HepG2 (cell line): ENCODE measurements at regions of chr21 and their contacts with region 1.

Region 1: GRCh38 chr21:36989699-36990507 is 16.6 kb upstream of the RIPPLY3 start:
- DNase-seq: peak; percentile 80
- ATAC-seq: peak; percentile 94
- H3K4me3 ChIP-seq: peak overlapping the region; percentile 63 to 69 (median 67); a peak in 5 of 6 replicates
- H3K27ac ChIP-seq: peak overlapping the region; percentile 92
- H3K4me1 ChIP-seq: peaks cover 60% of the 10 kb centered on the region
- H3K27me3 ChIP-seq: no peaks in the 10 kb centered on the region
- CTCF ChIP-seq: peak; percentile 86
- EP300 ChIP-seq: no peak
- POLR2A ChIP-seq: peak; percentile 72 to 75; a peak in 3 of 4 replicates
- RAD21 ChIP-seq: peak; percentile 88

Region 2: GRCh38 chr21:36835383-36835795 is 154.5 kb before region 1 on chr21:
- CTCF ChIA-PET with region 1: no interaction called
- POLR2A ChIA-PET with region 1: no interaction called
- in situ Hi-C with region 1: no loop called
- intact Hi-C with region 1: no loop called
- DNase-seq: no peak
- ATAC-seq: no peak
- H3K4me3 ChIP-seq: no peak overlapping the region
- H3K27ac ChIP-seq: no peak overlapping the region
- H3K4me1 ChIP-seq: peaks cover 12% of the 10 kb centered on the region; the same call in 1 of the 2 replicates
- H3K27me3 ChIP-seq: no peaks in the 10 kb centered on the region
- CTCF ChIP-seq: no peak
- EP300 ChIP-seq: no peak
- POLR2A ChIP-seq: no peak
- RAD21 ChIP-seq: no peak

Region 3: DNA sequence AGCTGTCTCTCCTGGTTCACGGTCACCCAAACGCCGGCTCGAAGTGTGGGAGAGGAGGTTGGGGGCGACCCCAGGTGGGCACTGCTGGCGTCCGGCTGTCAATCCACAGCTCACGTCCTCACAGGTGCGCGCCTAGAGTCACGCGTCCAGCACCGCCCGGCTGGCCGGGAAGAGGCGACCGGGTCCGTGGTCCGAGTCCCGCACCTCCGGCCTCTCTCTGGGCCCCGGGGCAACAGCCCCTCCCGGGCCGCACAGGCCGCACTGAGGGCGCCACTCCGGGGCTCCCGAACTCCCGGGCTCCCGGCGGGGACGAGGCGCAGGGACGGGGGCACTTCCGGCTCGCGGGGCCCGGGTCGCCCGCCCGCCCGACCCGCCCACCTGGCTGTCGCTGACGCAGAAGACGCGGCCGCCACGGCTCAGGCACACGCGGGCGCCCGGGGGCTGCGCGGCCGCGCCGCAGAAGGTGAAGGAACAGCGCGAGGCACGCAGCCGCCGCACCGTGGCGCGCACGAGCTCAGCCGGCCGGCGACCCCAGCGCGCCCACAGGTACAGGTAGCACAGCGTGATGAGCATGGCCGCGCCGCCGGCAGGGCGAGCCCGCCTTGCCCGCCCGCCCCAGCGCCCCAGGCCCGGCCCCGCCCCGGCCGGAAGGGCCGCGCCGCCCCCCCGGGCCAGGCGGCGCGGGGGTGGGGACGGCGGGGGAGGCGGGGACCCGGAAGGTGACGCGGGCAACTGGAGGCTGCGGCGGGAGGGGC is 23.7 kb before region 1 on chr21 and contains the start of gene HLCS:
- CTCF ChIA-PET with region 1: no interaction called
- POLR2A ChIA-PET with region 1: interaction called, 21 read pairs
- in situ Hi-C with region 1: no loop called
- intact Hi-C with region 1: no loop called
- DNase-seq: peak; percentile 59
- ATAC-seq: peak; percentile 84
- H3K4me3 ChIP-seq: peak within 1 kb of the TSS; percentile 83 to 88 (median 83)
- H3K27ac ChIP-seq: peak within 1 kb of the TSS; percentile 77
- H3K4me1 ChIP-seq: peaks cover 25% of the 10 kb centered on the region
- H3K27me3 ChIP-seq: no peaks in the 10 kb centered on the region
- CTCF ChIP-seq: peak; percentile 45
- EP300 ChIP-seq: no peak
- POLR2A ChIP-seq: peak; percentile 32 to 62; a peak in 3 of 4 replicates
- RAD21 ChIP-seq: 0 out of 2 replicates have a peak, but pooled peaks have one; percentile 20
- total RNA-seq, gene HLCS: 11.7 and 12.3 TPM in 2 replicates

Region 4: GRCh38 chr21:36976882-36977651 is 12.8 kb before region 1 on chr21:
- CTCF ChIA-PET with region 1: interaction called, 44 read pairs
- POLR2A ChIA-PET with region 1: interaction called, 25 read pairs
- in situ Hi-C with region 1: no loop called
- intact Hi-C with region 1: loop called (anchors 1 kb)
- DNase-seq: peak; percentile 87
- ATAC-seq: peak; percentile 89
- H3K4me3 ChIP-seq: peak overlapping the region in 1 of 3 experiments; percentile 7; a peak in 1 of 6 replicates
- H3K27ac ChIP-seq: peak overlapping the region; percentile 18
- H3K4me1 ChIP-seq: peaks cover 22% of the 10 kb centered on the region
- H3K27me3 ChIP-seq: no peaks in the 10 kb centered on the region
- CTCF ChIP-seq: peak; percentile 87
- EP300 ChIP-seq: no peak; a peak in 1 of 4 replicates
- POLR2A ChIP-seq: no peak
- RAD21 ChIP-seq: peak; percentile 77

Region 5: GRCh38 chr21:37009740-37010341 is 19.9 kb after region 1 on chr21:
- CTCF ChIA-PET with region 1: interaction called, 6 read pairs
- POLR2A ChIA-PET with region 1: interaction called, 13 read pairs
- in situ Hi-C with region 1: no loop called
- intact Hi-C with region 1: no loop called
- DNase-seq: peak; percentile 83
- ATAC-seq: peak; percentile 96
- H3K4me3 ChIP-seq: peak overlapping the region; percentile 56 to 74 (median 57)
- H3K27ac ChIP-seq: no peak overlapping the region
- H3K4me1 ChIP-seq: peaks cover 22% of the 10 kb centered on the region
- H3K27me3 ChIP-seq: peaks cover 0 to 4% of the 10 kb centered on the region in 2 experiments; a peak in 1 of 5 replicates
- CTCF ChIP-seq: peak; percentile 97
- EP300 ChIP-seq: no peak
- POLR2A ChIP-seq: 0 out of 4 replicates have a peak, but pooled peaks of 1 of the 2 experiments have one; percentile 23
- RAD21 ChIP-seq: peak; percentile 89

Region 6: DNA sequence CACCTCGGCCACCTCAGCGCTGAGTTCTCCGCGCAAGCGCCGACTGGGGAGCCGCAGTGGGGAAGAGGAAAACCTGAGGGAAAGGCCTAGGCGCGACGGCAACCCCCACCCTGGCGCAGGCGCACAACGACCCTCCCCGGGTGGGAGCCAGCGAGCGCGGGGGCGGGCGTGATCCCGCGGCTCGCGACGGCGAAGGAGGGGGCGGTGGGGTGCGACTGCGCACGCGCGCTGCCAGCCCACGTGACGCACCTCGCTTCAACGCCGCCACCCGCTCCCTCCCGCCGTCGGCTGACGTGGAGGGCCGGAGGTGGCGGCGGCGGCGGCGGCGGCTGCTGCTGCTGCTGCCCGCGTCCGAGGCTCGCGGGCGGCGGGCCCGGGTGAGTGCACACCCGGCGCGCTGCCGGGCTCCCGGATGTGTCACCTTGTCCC is 83.1 kb after region 1 on chr21 and contains the starts of genes PIGP and TTC3:
- CTCF ChIA-PET with region 1: no interaction called
- POLR2A ChIA-PET with region 1: interaction called, 11 read pairs
- in situ Hi-C with region 1: no loop called
- intact Hi-C with region 1: loop called (anchors 5 kb)
- DNase-seq: peak; percentile 87
- ATAC-seq: peak; percentile 83
- H3K4me3 ChIP-seq: peak within 1 kb of the TSS; percentile 81 to 92 (median 84)
- H3K27ac ChIP-seq: peak within 1 kb of the TSS; percentile 96
- H3K4me1 ChIP-seq: peaks cover 52% of the 10 kb centered on the region
- H3K27me3 ChIP-seq: no peaks in the 10 kb centered on the region; a peak in 1 of 5 replicates
- CTCF ChIP-seq: no peak
- EP300 ChIP-seq: no peak
- POLR2A ChIP-seq: peak; percentile 77 to 79
- RAD21 ChIP-seq: no peak
- total RNA-seq, gene PIGP: 13.7 and 14.8 TPM in 2 replicates
- total RNA-seq, gene TTC3: 108 and 162 TPM in 2 replicates